HEK293 (cell line): ENCODE measurements at regions of chr14 and their contacts with region 1.

Region 1: GRCh38 chr14:56862836-56863235 is 52.6 kb upstream of the OTX2 start:
- H3K4me3 ChIP-seq: no peak overlapping the region
- H3K27ac ChIP-seq: no peak overlapping the region
- H3K4me1 ChIP-seq: no peaks in the 10 kb centered on the region
- CTCF ChIP-seq: no peak

Region 2: DNA sequence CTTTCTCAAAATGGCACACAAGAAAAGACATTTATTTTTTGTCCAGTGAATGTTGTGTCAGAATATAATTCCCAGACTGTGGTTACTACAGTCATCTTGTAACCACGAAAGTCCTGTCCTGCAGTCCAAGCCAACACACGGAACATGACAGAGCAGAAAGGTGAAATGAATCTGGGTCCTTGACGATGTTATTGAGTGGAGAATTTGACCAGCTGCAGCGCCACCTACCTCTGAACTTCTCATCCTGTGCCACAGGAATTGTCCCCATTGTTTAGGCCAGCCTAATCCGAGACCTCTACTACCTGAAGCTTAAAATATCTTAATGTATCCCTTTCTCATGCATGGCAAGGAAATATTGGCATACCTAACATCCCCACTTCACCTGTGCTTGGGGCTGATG is 11.5 kb after region 1 on chr14:
- CTCF ChIA-PET with region 1: interaction called, 10 read pairs
- POLR2A ChIA-PET with region 1: no interaction called
- H3K4me3 ChIP-seq: no peak overlapping the region
- H3K27ac ChIP-seq: no peak overlapping the region
- H3K4me1 ChIP-seq: no peaks in the 10 kb centered on the region
- CTCF ChIP-seq: no peak